Left lung (tissue), 14 donors: ENCODE measurements at regions of chr22 and their contacts with region 1.

Region 1: DNA sequence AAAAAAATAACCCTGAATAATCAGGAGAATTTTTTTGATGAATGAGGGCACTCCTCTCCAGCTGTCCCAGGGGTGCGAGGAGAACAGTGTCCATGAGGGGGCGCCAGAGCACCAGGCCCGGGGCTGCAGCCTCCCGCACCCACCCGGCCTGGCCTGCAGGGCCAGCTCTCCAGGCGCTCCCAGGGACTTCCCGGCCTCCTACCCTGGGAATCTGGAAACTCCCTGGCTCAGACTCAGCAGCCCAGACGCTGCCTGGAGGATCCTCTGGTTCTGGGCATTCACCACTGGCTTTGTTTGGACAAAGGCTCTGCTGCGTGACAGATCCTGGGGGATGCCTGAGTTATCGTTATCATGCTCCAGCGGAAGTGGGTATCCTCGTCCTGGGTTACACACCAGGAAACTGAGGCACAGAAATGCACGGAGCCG is 31.0 kb downstream of the MCM5 start:
- DNase-seq: peak; percentile 78 to 93 (median 90)
- ATAC-seq: peak; percentile 99
- H3K4me3 ChIP-seq: no peak overlapping the region
- H3K27ac ChIP-seq: peak overlapping the region in 1 of 2 donors; percentile 48
- H3K4me1 ChIP-seq: peaks cover 5 to 14% of the 10 kb centered on the region in 2 donors
- H3K27me3 ChIP-seq: no peaks in the 10 kb centered on the region
- CTCF ChIP-seq: peak; percentile 91 to 96

Region 2: GRCh38 chr22:35589071-35589952 is 158.4 kb after region 1 on chr22:
- intact Hi-C with region 1: loop called in 1 of 2 experiments (anchors 5 kb)
- DNase-seq: peak in 2 of 4 donors; percentile 46 to 60
- ATAC-seq: peak; percentile 51
- H3K4me3 ChIP-seq: no peak overlapping the region
- H3K27ac ChIP-seq: no peak overlapping the region
- H3K4me1 ChIP-seq: peaks cover 0 to 24% of the 10 kb centered on the region in 2 donors
- H3K27me3 ChIP-seq: no peaks in the 10 kb centered on the region
- CTCF ChIP-seq: no peak

Region 3: DNA sequence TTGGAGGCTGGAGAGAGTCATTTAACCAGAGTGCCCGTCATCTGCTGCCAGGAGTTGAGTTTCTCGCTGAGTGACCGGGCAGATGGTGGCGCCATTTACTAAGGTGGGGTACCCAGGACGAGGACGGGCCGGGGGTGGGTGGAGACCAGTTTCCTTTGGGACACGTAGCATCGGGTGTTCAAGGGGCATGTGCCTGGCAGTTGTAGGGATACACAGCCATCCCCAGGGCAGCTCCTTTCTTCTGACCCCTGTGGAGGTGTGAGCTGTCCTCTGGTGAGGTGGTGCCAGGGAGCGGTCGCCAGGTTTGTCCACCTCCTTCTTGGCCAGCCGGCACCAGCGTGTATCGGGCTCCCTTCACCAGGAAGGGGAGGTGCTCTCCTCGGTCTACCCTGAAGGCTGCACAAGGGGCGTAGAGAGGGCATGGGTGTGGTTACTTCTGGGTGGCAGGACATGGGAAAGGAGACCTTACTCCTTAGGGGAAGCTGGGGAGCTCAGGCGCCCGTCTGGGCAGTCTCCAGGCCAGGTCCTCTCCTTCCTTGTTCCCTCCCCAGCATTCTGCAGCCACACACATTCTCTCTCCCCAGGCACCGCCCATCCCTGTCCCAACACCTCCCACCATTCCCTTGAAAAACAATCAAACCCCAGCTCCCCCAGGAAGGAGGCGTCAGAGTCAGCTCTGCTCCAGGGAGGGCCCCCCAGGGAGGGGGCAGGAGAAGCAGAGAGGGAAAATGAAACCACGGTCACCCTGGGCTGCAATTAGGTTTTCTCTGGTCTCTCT is 196.5 kb after region 1 on chr22:
- intact Hi-C with region 1: no loop called
- DNase-seq: peak; percentile 75 to 89 (median 86)
- ATAC-seq: peak; percentile 80
- H3K4me3 ChIP-seq: peak overlapping the region; percentile 48 to 51
- H3K27ac ChIP-seq: peak overlapping the region; percentile 84 to 88
- H3K4me1 ChIP-seq: peaks cover 0 to 36% of the 10 kb centered on the region in 2 donors
- H3K27me3 ChIP-seq: no peaks in the 10 kb centered on the region
- CTCF ChIP-seq: peak in 1 of 2 donors; percentile 19